ENCODE measurements at regions of chr18 and their contacts with region 1.

Region 1: GRCh38 chr18:45890606-45891005 is 65.1 kb downstream of the SIGLEC15 start:
- DNase-seq: no peak
- H3K4me3 ChIP-seq: no peak overlapping the region
- H3K27ac ChIP-seq: no peak overlapping the region
- H3K4me1 ChIP-seq: no peaks in the 10 kb centered on the region
- H3K27me3 ChIP-seq: no peaks in the 10 kb centered on the region
- CTCF ChIP-seq: no peak

Region 2: DNA sequence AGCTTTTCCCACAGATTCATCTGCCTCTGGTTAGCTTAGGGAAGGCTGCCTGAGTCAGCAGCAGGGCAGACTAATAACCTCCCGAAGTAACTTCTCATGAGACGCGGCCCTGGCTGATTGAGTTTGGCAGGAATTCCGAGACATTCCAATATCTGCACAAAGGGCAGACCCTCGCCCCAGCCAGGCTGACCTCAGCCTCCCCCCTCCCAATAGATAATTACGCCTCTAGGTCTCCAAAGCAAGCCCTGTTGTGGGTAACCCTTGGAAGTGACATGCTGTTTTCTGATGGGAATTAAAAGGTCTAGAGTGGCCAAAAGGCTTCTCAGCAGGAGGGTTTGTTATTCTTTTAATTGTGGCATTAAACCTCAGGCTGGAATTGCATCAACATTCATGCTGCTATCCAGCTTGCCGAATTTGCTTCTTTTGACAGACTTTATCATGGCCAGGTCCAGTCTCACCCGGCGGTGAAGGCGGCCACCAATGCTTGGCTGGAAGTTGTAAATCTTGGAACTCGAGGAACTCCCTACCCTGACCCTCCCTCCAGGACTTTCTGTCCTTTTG is 373.3 kb before region 1 on chr18:
- CTCF ChIA-PET with region 1: no interaction called
- POLR2A ChIA-PET with region 1: no interaction called
- intact Hi-C with region 1: no loop called
- DNase-seq: no peak
- H3K4me3 ChIP-seq: no peak overlapping the region
- H3K27ac ChIP-seq: no peak overlapping the region
- H3K4me1 ChIP-seq: no peaks in the 10 kb centered on the region
- H3K27me3 ChIP-seq: peaks cover 12% of the 10 kb centered on the region; the same call in 1 of the 2 replicates
- CTCF ChIP-seq: no peak

Region 3: DNA sequence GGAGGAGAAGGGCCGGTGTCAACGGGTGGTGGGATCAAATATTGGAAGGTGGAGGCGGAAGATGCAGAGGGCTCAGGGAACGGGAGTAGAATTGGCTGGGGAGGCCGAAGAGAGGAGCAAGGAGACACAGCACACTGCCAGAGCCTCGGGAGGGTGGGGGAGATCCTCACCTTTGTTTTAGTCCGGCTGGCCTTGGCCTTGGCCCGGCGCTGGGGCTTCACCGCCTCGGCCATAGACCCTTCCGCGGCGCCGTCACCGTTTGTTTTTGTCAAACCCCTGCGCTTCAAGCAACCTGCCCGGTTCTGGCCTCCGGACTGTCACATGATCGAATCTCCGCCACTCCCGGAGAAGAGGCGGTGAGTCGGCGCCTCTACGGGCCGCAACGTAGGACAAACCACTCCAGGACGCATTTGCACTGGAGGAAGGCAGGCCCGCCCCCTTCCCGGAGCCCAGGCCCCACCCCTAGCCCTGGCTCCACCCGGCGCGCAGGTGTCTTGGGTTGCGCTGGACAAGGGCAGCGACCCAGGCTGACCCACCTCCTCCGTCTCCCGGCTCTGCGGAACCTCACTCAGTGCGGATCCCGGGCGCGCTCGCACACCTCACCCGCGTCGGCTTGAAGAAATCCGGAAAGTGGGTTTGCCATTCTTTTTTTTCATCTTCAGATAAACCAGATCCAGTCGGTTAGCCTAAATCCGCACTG is 76.6 kb after region 1 on chr18 and contains the start of gene EPG5:
- CTCF ChIA-PET with region 1: no interaction called
- POLR2A ChIA-PET with region 1: interaction called, 10 read pairs
- intact Hi-C with region 1: no loop called
- DNase-seq: peak; percentile 92 to 95
- H3K4me3 ChIP-seq: peak within 1 kb of the TSS; percentile 98
- H3K27ac ChIP-seq: peak within 1 kb of the TSS; percentile 25
- H3K4me1 ChIP-seq: peaks cover 13% of the 10 kb centered on the region; the same call in 1 of the 2 replicates
- H3K27me3 ChIP-seq: no peaks in the 10 kb centered on the region
- CTCF ChIP-seq: no peak
- total RNA-seq, gene EPG5: 16.7 and 19.5 TPM in 2 replicates

Region 4: DNA sequence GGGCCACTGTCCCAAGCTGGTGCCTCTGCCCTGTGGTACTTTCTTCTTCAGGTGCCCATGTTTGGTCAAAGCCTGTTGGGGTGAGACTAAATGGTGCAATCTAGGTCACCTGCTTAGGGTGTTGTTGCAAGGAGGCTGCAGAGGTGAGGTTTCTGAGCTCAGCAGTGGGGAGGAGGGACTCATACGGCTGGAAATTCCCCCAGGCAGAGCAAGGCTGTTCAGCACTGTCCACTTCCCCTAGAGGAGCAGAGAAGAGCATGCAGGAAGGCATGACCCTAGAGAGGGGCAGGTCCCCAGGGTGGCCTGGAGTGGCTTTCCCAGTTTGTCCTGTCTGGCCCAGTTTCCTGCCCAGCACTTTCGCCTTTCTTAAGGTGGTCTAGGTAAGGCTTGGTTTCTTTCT is 424.6 kb after region 1 on chr18:
- CTCF ChIA-PET with region 1: no interaction called
- POLR2A ChIA-PET with region 1: no interaction called
- intact Hi-C with region 1: no loop called
- DNase-seq: peak in 1 of 2 experiments; percentile 55
- H3K4me3 ChIP-seq: no peak overlapping the region
- H3K27ac ChIP-seq: peak overlapping the region; percentile 47
- H3K4me1 ChIP-seq: peaks cover 28% of the 10 kb centered on the region
- H3K27me3 ChIP-seq: no peaks in the 10 kb centered on the region
- CTCF ChIP-seq: no peak

Measured in PC-9 (cell line).